MCF 10A (cell line): ENCODE measurements at regions of chr16 and their contacts with region 1.

Region 1: GRCh38 chr16:24700549-24701392 is 28.7 kb upstream of the TNRC6A start:
- DNase-seq: peak; percentile 97
- H3K4me3 Mint-ChIP-seq: peak overlapping the region; percentile 45
- H3K27ac Mint-ChIP-seq: peak overlapping the region; percentile 92
- H3K4me1 Mint-ChIP-seq: peaks cover 30% of the 10 kb centered on the region
- H3K27me3 Mint-ChIP-seq: no peaks in the 10 kb centered on the region
- CTCF ChIP-seq: no peak

Region 2: DNA sequence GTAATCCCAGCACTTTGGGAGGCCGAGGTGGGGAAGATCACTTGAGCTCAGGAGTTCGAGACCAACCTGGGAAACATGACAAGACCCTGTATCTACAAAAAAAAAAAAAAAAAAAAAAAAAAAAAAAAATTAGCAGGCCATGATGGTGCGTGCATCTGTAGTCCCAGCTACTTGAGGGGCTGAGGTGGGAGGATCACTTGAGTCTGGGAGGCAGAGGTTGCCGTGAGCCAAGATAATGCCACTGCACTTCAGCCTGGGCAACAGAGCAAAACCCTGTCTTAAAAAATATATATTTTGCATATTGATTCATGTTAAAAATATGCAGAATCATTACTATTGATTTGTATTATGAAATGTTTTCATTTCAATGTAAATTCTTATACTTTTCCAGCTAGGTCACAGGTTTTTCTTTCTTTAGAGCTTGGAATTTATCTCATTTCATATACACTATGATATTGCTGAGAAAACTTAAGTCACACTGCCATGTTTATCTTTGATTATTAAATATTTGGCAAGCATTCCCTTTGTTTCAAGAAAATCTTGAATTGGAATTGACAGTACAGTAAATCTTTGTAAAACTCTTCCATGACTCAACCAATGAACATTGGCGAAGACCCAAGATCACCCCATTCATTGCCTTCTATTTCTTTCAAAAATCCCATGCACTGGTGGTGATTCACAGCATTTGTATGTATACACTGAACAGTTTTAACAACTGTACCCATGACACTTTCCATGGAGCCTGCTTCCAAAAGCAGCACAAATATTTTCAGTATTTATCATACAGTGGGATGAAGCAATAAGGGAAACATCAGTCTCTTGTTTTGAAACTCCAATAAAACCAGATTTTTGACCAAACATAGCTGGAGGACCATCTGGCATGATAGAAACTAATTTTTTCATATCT is 54.8 kb before region 1 on chr16:
- CTCF ChIA-PET with region 1: interaction called, 4 read pairs
- POLR2A ChIA-PET with region 1: no interaction called
- intact Hi-C with region 1: loop called (anchors 1 kb)
- DNase-seq: peak; percentile 99
- H3K4me3 Mint-ChIP-seq: no peak overlapping the region
- H3K27ac Mint-ChIP-seq: peak overlapping the region; percentile 67
- H3K4me1 Mint-ChIP-seq: no peaks in the 10 kb centered on the region
- H3K27me3 Mint-ChIP-seq: no peaks in the 10 kb centered on the region
- CTCF ChIP-seq: no peak

Region 3: DNA sequence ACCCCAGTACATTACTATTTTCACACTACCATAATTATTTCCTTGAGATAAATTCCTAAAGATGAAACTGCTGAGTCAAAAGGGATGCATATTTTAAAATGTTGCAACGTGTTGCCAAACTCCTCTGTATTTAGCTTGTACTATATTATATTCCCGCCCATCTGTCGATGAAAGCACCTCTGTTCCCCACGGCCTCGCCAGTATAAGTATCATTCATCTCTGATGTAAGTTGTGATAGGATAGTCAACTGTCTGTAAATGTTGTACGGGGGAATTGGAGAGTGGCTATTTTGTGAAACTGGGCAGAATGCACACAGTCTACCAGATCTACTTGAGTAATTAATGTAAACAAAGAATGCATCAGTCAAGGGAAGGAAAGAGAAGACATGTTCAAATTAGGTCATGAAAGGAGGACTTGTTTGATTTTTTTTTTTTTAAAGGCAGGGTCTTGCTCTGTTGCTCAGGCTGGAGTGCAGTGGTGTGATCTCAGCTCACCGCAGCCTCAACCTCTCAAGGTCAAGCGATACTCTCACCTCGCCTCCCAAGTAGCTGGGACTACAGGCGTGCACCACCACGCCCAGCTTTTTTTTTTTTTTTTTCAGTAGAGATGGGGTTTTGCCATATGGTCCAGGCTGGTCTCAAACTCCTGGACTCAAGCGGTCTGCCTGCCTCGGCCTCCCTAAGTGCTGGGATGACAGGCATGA is 18.8 kb before region 1 on chr16:
- CTCF ChIA-PET with region 1: interaction called, 12 read pairs
- POLR2A ChIA-PET with region 1: interaction called, 6 read pairs
- intact Hi-C with region 1: no loop called
- DNase-seq: peak; percentile 78
- H3K4me3 Mint-ChIP-seq: no peak overlapping the region
- H3K27ac Mint-ChIP-seq: peak overlapping the region; percentile 77
- H3K4me1 Mint-ChIP-seq: peaks cover 6% of the 10 kb centered on the region
- H3K27me3 Mint-ChIP-seq: no peaks in the 10 kb centered on the region
- CTCF ChIP-seq: no peak

Region 4: DNA sequence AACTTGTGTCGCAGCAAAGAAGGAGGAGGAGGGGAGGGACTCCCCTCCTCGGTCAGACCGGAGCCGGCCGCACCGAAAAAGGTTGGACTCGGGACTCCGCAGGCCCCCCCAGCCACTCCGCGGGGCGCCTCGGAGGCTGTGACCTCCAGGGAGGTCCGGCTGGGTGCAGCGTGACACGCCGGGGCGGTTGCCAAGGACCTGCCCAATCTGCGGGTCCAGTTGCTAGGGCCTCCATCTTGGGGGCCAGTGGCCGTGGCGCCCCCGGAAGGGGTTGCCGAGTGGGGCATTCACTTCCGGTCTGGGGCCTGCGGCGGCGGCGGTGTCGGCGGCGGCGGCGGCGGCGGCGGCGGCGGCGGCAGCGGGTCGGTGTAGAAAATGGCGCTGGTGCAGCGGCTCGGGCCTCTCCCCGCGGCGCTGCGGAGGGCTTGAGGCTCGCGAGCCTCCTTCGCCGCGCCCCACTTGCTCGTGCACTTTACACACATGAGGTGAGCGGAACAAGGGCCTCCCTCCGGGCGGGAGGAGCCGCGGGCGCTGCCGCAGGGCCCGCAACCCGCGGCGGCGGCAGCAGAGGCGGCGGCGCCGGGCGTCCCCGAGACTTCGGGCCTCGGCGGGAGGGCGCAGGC is 28.7 kb after region 1 on chr16 and contains the start of gene TNRC6A:
- CTCF ChIA-PET with region 1: interaction called, 5 read pairs
- POLR2A ChIA-PET with region 1: interaction called, 9 read pairs
- intact Hi-C with region 1: loop called (anchors 1 kb)
- DNase-seq: peak; percentile 83
- H3K4me3 Mint-ChIP-seq: peak within 1 kb of the TSS; percentile 88
- H3K27ac Mint-ChIP-seq: peak within 1 kb of the TSS; percentile 93
- H3K4me1 Mint-ChIP-seq: peaks cover 27% of the 10 kb centered on the region
- H3K27me3 Mint-ChIP-seq: no peaks in the 10 kb centered on the region
- CTCF ChIP-seq: no peak
- total RNA-seq, gene TNRC6A: 41.6 and 50.3 TPM in 2 replicates

Region 5: DNA sequence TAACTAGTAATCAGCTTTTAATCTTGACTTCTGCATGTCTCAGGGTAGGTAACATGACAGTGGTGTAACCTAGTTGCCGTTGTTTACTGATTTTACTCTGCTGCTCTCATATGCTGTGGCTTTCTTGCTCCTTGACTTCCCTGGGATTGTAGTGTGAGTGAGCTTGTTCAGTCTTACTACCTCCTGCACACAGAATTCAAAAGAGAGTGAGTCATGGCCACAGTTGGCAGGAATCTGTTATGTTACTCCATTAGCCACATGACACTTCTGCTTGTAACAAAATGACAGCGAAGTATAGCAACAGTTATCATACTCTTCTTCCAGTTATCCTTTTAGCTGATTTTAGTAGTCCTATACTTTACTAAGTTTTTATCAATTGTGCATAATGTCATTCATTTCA is 47.5 kb after region 1 on chr16:
- CTCF ChIA-PET with region 1: interaction called, 4 read pairs
- POLR2A ChIA-PET with region 1: interaction called, 3 read pairs
- intact Hi-C with region 1: loop called (anchors 1 kb)
- DNase-seq: peak; percentile 90
- H3K4me3 Mint-ChIP-seq: peak overlapping the region; percentile 21
- H3K27ac Mint-ChIP-seq: peak overlapping the region; percentile 96
- H3K4me1 Mint-ChIP-seq: peaks cover 57% of the 10 kb centered on the region
- H3K27me3 Mint-ChIP-seq: no peaks in the 10 kb centered on the region
- CTCF ChIP-seq: no peak